Naive thymus-derived CD4-positive, alpha-beta T cell (primary cell): ENCODE measurements at regions of chr9 and their contacts with region 1.

Region 1: GRCh38 chr9:124420991-124421543 is 5.8 kb upstream of the PSMB7 start:
- DNase-seq: peak in 1 of 9 donors; percentile 10
- ATAC-seq: no peak
- H3K4me3 ChIP-seq: no peak overlapping the region
- H3K4me3 Mint-ChIP-seq: no peak overlapping the region
- H3K27ac ChIP-seq: no peak overlapping the region
- H3K27ac Mint-ChIP-seq: no peak overlapping the region
- H3K4me1 ChIP-seq: no peaks in the 10 kb centered on the region
- H3K4me1 Mint-ChIP-seq: peaks cover 0 to 8% (median 0%) of the 10 kb centered on the region in 7 donors
- H3K27me3 ChIP-seq: no peaks in the 10 kb centered on the region
- H3K27me3 Mint-ChIP-seq: peaks cover 0 to 11% (median 5%) of the 10 kb centered on the region in 5 donors

Region 2: DNA sequence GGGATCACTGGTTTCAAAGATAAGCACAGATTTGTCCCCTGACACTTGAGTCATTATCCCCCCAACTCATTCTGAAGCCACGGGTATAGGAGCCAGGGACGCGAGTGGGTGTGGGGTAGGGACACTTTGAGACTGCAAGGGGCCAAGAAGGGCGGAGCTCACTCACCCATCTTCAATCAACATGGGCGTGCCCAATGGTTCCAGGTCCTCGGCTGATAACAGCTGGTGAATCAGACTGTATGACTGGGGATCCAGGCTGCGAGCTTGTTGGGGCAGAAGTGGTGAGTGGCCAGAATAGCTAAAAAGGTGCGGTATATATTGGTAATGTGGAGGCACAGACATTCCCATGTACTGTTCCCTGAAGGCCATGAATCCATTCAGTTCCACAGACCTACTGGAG is 116.9 kb after region 1 on chr9:
- CTCF ChIA-PET with region 1: interaction called, 27 read pairs
- POLR2A ChIA-PET with region 1: no interaction called
- intact Hi-C with region 1: loop called in 1 of 2 experiments (anchors 1 kb)
- DNase-seq: no peak
- ATAC-seq: no peak
- H3K4me3 ChIP-seq: no peak overlapping the region
- H3K4me3 Mint-ChIP-seq: no peak overlapping the region
- H3K27ac ChIP-seq: no peak overlapping the region
- H3K27ac Mint-ChIP-seq: no peak overlapping the region
- H3K4me1 ChIP-seq: no peaks in the 10 kb centered on the region
- H3K4me1 Mint-ChIP-seq: no peaks in the 10 kb centered on the region
- H3K27me3 ChIP-seq: no peaks in the 10 kb centered on the region
- H3K27me3 Mint-ChIP-seq: peaks cover 0 to 17% (median 8%) of the 10 kb centered on the region in 5 donors

Region 3: DNA sequence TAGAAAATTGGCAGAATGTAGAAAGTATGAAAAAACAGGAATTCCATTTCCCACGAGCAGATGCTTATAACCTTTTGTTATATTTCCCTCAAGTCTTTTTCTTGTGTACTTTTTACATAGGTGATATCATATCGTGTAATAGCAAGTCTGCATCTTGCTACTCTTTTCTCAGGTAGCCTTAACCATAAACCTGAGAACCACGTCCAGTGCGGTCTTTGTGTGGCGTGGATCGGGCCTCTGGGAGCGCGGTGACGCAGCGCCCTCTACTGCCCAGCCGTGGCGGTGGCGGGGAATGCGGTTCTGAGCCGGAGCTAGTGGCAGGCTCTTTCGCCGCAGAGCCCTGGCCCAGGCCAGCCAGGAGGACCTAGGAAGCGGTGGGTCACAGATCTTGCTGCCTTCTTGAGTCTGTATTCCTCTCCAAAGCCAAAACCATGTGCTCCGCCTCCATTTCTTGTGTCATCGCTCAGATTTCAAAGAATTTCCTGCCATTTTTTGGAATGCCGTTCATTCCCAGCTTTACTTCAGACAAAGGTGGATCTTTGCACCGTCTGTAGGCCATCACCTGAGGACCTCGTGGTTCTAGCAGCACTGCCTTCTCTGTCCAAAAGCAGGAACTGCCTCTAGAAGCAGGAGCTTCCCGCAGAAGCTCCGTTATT is 1977.5 kb after region 1 on chr9:
- CTCF ChIA-PET with region 1: no interaction called
- POLR2A ChIA-PET with region 1: no interaction called
- intact Hi-C with region 1: no loop called
- DNase-seq: peak; percentile 38 to 83 (median 62)
- ATAC-seq: peak; percentile 63
- H3K4me3 ChIP-seq: no peak overlapping the region
- H3K4me3 Mint-ChIP-seq: peak overlapping the region in 9 of 10 donors; percentile 31 to 77 (median 61)
- H3K27ac ChIP-seq: no peak overlapping the region
- H3K27ac Mint-ChIP-seq: peak overlapping the region in 8 of 9 donors; percentile 34 to 91 (median 66)
- H3K4me1 ChIP-seq: peaks cover 22 to 28% of the 10 kb centered on the region in 2 donors
- H3K4me1 Mint-ChIP-seq: peaks cover 20 to 57% (median 36%) of the 10 kb centered on the region in 7 donors
- H3K27me3 ChIP-seq: no peaks in the 10 kb centered on the region
- H3K27me3 Mint-ChIP-seq: peaks cover 0 to 16% (median 0%) of the 10 kb centered on the region in 5 donors